ENCODE measurements at regions of chr5 and their contacts with region 1.

Region 1: DNA sequence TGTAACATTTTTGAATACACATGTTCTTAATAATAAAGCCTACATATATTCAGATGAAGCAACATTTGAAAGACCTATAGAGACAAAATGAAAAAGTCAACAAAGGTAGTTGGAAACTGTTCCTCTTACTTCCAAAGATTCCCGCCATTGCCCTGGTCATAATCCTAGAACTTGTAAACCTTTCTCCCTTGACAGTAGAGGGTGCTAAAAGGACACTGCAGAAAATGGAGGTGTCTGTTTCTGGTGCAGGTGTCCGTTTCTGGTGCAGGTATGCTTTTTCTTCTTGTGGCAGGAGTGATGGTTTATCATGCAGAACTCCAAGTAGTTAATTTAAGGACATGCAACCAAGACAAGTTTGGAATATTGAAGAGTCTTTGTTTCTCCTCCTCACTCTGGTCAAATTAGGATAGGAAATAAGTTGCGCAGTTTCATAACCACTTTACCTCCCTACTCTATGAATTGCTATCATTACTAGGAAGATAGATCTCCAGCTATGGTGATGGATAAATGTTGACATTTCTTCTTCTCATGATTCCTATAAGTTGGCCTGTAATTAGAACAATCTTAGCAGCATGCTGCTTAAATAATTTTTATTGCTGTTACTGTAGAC is 56.0 kb upstream of the FAM174A start:
- DNase-seq: no peak
- ATAC-seq: no peak
- H3K4me3 Mint-ChIP-seq: no peak overlapping the region
- H3K27ac Mint-ChIP-seq: no peak overlapping the region
- H3K4me1 Mint-ChIP-seq: no peaks in the 10 kb centered on the region
- H3K27me3 Mint-ChIP-seq: peaks cover 3% of the 10 kb centered on the region
- CTCF ChIP-seq: no peak

Region 2: GRCh38 chr5:101390151-101390908 is 911.1 kb after region 1 on chr5:
- CTCF ChIA-PET with region 1: no interaction called
- POLR2A ChIA-PET with region 1: no interaction called
- intact Hi-C with region 1: loop called (anchors 1 kb)
- DNase-seq: no peak
- ATAC-seq: no peak
- H3K4me3 Mint-ChIP-seq: no peak overlapping the region
- H3K27ac Mint-ChIP-seq: no peak overlapping the region
- H3K4me1 Mint-ChIP-seq: no peaks in the 10 kb centered on the region
- H3K27me3 Mint-ChIP-seq: no peaks in the 10 kb centered on the region
- CTCF ChIP-seq: no peak

Region 3: DNA sequence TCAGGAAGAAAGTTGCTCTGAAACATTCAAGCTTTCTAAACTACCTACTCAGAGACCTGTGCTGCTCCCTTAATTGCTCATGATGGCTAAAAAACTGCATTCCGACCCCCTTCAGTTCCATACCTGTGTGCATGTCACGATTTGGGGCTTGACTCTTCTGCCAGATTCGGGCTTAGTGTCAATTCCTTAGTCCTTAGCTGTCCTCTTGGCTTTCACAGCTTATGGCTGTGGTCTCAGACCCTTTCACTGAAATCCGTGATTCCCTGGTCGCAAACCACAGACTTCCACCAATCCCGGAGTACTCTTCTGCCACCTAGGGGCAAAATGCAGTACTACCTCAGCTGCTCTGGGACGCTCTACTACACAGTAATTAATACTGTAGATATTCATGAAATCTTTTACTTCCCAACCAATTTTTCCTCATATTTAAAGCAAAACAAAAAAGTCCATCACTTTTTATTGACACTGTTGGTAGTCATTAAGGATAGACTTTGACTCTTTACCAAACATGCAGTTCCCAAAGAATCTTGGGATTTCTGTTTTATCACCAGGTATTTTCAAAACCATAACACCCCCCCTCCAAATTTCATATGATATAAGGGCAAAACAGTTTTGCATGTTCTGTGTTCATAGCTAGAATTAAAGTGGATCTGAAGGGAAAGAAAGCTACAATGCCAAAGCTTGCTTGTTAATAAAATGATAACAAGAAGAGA is 1199.5 kb after region 1 on chr5:
- CTCF ChIA-PET with region 1: interaction called, 3 read pairs
- POLR2A ChIA-PET with region 1: no interaction called
- intact Hi-C with region 1: loop called (anchors 2 kb)
- DNase-seq: no peak
- ATAC-seq: peak; percentile 56
- H3K4me3 Mint-ChIP-seq: no peak overlapping the region
- H3K27ac Mint-ChIP-seq: no peak overlapping the region
- H3K4me1 Mint-ChIP-seq: no peaks in the 10 kb centered on the region
- H3K27me3 Mint-ChIP-seq: no peaks in the 10 kb centered on the region
- CTCF ChIP-seq: no peak

Measured in activated B cell treated with CpG ODN at 0.5 μM for 24 hours (primary cell).